Dendritic cell treated with granulocyte-macrophage colony-stimulating factor and Interleukin-4, amounts not matched to agents 40 ng/mL and 50 ng/mL, for 4 days (primary cell): ENCODE measurements at regions of chr7 and their contacts with region 1.

Region 1: GRCh38 chr7:30225863-30226613 is 58.4 kb upstream of the ZNRF2 start:
- H3K4me3 Mint-ChIP-seq: peak overlapping the region; percentile 50
- H3K27ac Mint-ChIP-seq: peak overlapping the region; percentile 91
- H3K4me1 Mint-ChIP-seq: peaks cover 66% of the 10 kb centered on the region
- H3K27me3 Mint-ChIP-seq: no peaks in the 10 kb centered on the region

Region 2: DNA sequence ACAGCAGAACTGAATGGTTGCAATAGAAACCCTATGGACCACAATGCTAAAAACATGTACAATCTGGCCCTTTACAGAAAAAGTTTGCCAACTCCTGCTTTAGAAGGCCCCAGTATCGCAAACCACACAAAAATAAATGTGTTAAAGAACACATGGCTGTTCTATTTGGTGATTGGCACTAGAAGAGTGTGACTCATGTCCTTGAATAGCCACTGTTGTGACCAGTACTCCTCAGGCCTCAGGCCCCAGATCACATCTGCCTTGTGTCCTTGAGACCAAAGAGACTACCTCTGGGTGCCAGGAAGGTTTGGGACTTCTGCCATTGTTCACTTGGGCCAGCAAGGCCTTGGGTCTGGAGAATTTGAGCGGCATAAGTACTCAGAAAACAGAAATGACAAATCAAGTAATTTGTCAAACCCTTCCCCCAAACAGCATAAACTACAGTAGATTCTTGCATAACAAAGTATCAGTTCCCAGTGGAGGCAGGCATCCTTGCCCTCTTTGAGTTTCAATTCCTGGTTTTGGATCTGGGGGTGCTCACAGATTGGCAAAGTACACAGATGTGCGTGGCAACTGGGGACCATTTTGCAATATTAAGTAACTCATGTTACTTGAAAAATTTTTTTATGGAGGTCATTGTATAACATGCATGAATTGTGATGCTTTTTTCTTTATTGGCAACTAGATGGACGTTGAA is 41.1 kb before region 1 on chr7:
- intact Hi-C with region 1: loop called (anchors 2 kb)
- H3K4me3 Mint-ChIP-seq: no peak overlapping the region
- H3K27ac Mint-ChIP-seq: peak overlapping the region; percentile 94
- H3K4me1 Mint-ChIP-seq: peaks cover 40% of the 10 kb centered on the region
- H3K27me3 Mint-ChIP-seq: no peaks in the 10 kb centered on the region

Region 3: DNA sequence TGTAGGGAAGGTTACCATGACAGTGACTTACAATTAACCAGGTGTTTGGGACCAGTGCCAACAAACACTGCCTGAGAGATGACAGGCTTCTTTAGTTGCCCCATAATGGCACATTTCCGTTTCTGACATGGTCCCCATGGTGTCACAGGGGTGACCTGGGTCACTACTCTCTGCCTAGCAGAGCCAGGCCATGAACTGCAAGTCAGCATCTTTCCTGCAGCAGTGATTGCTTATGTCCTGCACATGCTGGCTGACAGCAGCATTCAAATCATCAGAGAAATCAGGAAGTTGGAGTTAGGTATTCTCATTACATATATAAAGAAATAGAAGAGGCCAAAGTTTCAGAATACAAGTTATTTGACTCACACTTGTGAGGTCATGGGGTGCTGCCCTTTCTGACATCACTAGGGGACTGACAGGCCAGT is 11.2 kb after region 1 on chr7:
- intact Hi-C with region 1: loop called (anchors 1 kb)
- H3K4me3 Mint-ChIP-seq: no peak overlapping the region
- H3K27ac Mint-ChIP-seq: peak overlapping the region; percentile 55
- H3K4me1 Mint-ChIP-seq: peaks cover 46% of the 10 kb centered on the region
- H3K27me3 Mint-ChIP-seq: peaks cover 3% of the 10 kb centered on the region

Region 4: GRCh38 chr7:30252885-30253795 is 27.1 kb after region 1 on chr7:
- intact Hi-C with region 1: loop called (anchors 1 kb)
- H3K4me3 Mint-ChIP-seq: no peak overlapping the region
- H3K27ac Mint-ChIP-seq: peak overlapping the region; percentile 85
- H3K4me1 Mint-ChIP-seq: peaks cover 73% of the 10 kb centered on the region
- H3K27me3 Mint-ChIP-seq: no peaks in the 10 kb centered on the region

Region 5: GRCh38 chr7:30284298-30285066 is 58.4 kb after region 1 on chr7 and contains the start of gene ZNRF2:
- intact Hi-C with region 1: loop called (anchors 2 kb)
- H3K4me3 Mint-ChIP-seq: peak within 1 kb of the TSS; percentile 90
- H3K27ac Mint-ChIP-seq: peak within 1 kb of the TSS; percentile 92
- H3K4me1 Mint-ChIP-seq: peaks cover 36% of the 10 kb centered on the region
- H3K27me3 Mint-ChIP-seq: no peaks in the 10 kb centered on the region